GM12878 (cell line): ENCODE measurements at regions of chr9 and their contacts with region 1.

Region 1: GRCh38 chr9:72038890-72039410 is 21.5 kb downstream of the C9orf57 start:
- DNase-seq: peak; percentile 45
- ATAC-seq: peak; percentile 95
- H3K4me3 ChIP-seq: no peak overlapping the region
- H3K27ac ChIP-seq: no peak overlapping the region
- H3K4me1 ChIP-seq: no peaks in the 10 kb centered on the region; the same call in 1 of the 2 replicates
- H3K27me3 ChIP-seq: no peaks in the 10 kb centered on the region
- CTCF ChIP-seq: peak; percentile 93 to 96 (median 94)
- EP300 ChIP-seq: no peak
- POLR2A ChIP-seq: no peak
- RAD21 ChIP-seq: peak; percentile 95

Region 2: GRCh38 chr9:71716138-71716909 is 322.6 kb before region 1 on chr9:
- CTCF ChIA-PET with region 1: no interaction called
- POLR2A ChIA-PET with region 1: no interaction called
- RAD21 ChIA-PET with region 1: no interaction called
- SMC1A ChIA-PET with region 1: no interaction called
- in situ Hi-C with region 1: no loop called
- intact Hi-C with region 1: no loop called
- DNase-seq: no peak
- ATAC-seq: no peak
- H3K4me3 ChIP-seq: no peak overlapping the region
- H3K27ac ChIP-seq: no peak overlapping the region
- H3K4me1 ChIP-seq: no peaks in the 10 kb centered on the region
- H3K27me3 ChIP-seq: no peaks in the 10 kb centered on the region
- CTCF ChIP-seq: peak in 2 of 3 experiments; percentile 17 to 25; a peak in 3 of 6 replicates
- EP300 ChIP-seq: no peak
- POLR2A ChIP-seq: no peak
- RAD21 ChIP-seq: no peak

Region 3: DNA sequence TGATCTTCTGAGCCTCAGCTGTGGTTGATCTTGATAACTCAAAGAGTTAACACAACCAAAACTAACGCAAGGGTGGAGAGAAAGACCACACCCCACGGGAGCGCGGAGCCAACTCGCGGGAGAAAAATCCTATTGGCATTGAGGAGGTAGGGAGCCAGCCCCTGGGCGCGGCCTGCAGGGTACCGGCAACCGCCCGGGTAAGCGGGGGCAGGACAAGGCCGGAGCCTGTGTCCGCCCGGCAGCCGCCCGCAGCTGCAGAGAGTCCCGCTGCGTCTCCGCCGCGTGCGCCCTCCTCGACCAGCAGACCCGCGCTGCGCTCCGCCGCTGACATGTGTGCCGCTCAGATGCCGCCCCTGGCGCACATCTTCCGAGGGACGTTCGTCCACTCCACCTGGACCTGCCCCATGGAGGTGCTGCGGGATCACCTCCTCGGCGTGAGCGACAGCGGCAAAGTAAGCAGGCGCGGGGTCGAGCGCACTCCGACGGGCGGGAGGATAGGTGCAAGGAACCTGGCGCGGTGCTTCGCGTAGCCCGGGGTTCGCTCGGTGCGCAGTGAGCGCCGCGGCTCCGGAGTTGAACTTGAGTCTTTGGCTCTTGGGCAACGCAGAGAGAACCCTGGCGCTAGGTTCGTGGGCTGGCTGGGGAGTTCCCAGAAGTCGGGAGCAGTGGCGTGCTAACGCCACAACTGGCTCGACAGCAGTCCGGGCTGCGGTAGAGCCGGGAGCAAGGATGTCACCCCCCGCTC is 110.5 kb after region 1 on chr9 and contains the start of gene GDA:
- CTCF ChIA-PET with region 1: interaction called, 6 read pairs
- POLR2A ChIA-PET with region 1: no interaction called
- RAD21 ChIA-PET with region 1: interaction called, 15 read pairs
- SMC1A ChIA-PET with region 1: interaction called, 10 read pairs
- in situ Hi-C with region 1: no loop called
- intact Hi-C with region 1: loop called (anchors 2 kb)
- DNase-seq: no peak
- ATAC-seq: peak; percentile 41
- H3K4me3 ChIP-seq: no peak within 1 kb of the TSS
- H3K27ac ChIP-seq: no peak within 1 kb of the TSS
- H3K4me1 ChIP-seq: no peaks in the 10 kb centered on the region; the same call in 1 of the 2 replicates
- H3K27me3 ChIP-seq: peaks cover 2 to 3% of the 10 kb centered on the region in 2 experiments; a peak in 2 of 4 replicates
- CTCF ChIP-seq: no peak
- EP300 ChIP-seq: no peak
- POLR2A ChIP-seq: no peak
- RAD21 ChIP-seq: no peak
- polyA plus RNA-seq, gene GDA: 0.23 to 0.49 TPM

Region 4: GRCh38 chr9:72203205-72203803 is 164.4 kb after region 1 on chr9:
- CTCF ChIA-PET with region 1: interaction called, 82 read pairs
- POLR2A ChIA-PET with region 1: interaction called, 6 read pairs
- RAD21 ChIA-PET with region 1: interaction called, 37 read pairs
- SMC1A ChIA-PET with region 1: interaction called, 80 read pairs
- in situ Hi-C with region 1: no loop called
- intact Hi-C with region 1: loop called (anchors 1 kb)
- DNase-seq: no peak
- ATAC-seq: peak; percentile 76
- H3K4me3 ChIP-seq: no peak overlapping the region
- H3K27ac ChIP-seq: no peak overlapping the region
- H3K4me1 ChIP-seq: peaks cover 4% of the 10 kb centered on the region
- H3K27me3 ChIP-seq: no peaks in the 10 kb centered on the region
- CTCF ChIP-seq: peak; percentile 62 to 71 (median 71)
- EP300 ChIP-seq: no peak
- POLR2A ChIP-seq: no peak
- RAD21 ChIP-seq: peak; percentile 51

Region 5: DNA sequence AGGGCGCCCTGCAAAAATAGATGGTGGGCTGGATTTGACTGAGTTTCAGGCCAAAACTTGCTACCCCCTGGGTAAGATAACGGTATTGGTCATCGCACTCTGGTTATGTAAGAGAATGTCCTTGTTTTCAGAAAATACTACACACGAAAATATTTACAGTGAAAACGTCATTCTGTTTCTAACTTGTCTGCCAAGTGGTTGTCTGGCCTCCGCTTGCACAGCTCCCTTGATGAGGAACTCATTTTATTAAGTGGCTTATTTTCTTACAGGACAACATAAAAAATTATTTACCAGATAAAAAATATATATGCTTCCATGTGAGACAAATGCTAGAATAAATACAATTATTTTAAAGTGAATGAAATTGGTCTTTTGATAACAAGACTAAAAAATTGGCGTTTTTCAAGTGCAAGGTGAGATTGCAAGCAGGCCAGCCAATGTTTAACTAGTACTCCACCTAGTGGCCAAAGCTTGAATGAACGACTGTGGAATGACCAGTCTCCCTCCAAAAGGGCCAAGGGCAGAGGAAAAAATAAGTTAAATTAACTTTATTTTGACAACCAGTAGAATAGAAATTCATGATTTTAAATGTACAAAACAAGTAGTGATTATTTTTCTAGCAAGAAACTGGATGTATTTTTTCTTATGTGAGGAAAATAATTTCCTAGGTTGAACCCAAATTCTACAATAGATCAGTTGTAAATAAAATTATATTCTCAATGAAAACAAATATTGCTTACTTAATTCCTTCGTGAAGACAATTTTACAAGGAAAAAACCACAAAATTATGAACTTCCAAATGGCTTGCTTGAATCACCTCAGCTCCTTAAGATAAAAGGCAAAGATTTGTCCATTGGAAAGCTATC is 232.9 kb after region 1 on chr9:
- CTCF ChIA-PET with region 1: interaction called, 470 read pairs
- POLR2A ChIA-PET with region 1: interaction called, 3 read pairs
- RAD21 ChIA-PET with region 1: interaction called, 365 read pairs
- SMC1A ChIA-PET with region 1: interaction called, 367 read pairs
- in situ Hi-C with region 1: loop called (anchors 5 kb)
- intact Hi-C with region 1: loop called (anchors 1 kb)
- DNase-seq: no peak
- ATAC-seq: peak; percentile 78
- H3K4me3 ChIP-seq: no peak overlapping the region
- H3K27ac ChIP-seq: no peak overlapping the region
- H3K4me1 ChIP-seq: peaks cover 3% of the 10 kb centered on the region; the same call in 1 of the 2 replicates
- H3K27me3 ChIP-seq: peaks cover 0 to 2% of the 10 kb centered on the region in 2 experiments; a peak in 1 of 4 replicates
- CTCF ChIP-seq: peak; percentile 80 to 82 (median 81)
- EP300 ChIP-seq: no peak
- POLR2A ChIP-seq: no peak
- RAD21 ChIP-seq: peak; percentile 83

Region 6: GRCh38 chr9:72592502-72593403 is 553.8 kb after region 1 on chr9:
- CTCF ChIA-PET with region 1: interaction called, 10 read pairs
- POLR2A ChIA-PET with region 1: no interaction called
- RAD21 ChIA-PET with region 1: interaction called, 6 read pairs
- SMC1A ChIA-PET with region 1: interaction called, 12 read pairs
- in situ Hi-C with region 1: loop called (anchors 5 kb)
- intact Hi-C with region 1: loop called (anchors 5 kb)
- DNase-seq: peak; percentile 23
- ATAC-seq: peak; percentile 94
- H3K4me3 ChIP-seq: no peak overlapping the region
- H3K27ac ChIP-seq: no peak overlapping the region
- H3K4me1 ChIP-seq: no peaks in the 10 kb centered on the region
- H3K27me3 ChIP-seq: no peaks in the 10 kb centered on the region
- CTCF ChIP-seq: peak; percentile 64 to 76 (median 69)
- EP300 ChIP-seq: no peak
- POLR2A ChIP-seq: no peak
- RAD21 ChIP-seq: peak; percentile 86

Region 7: GRCh38 chr9:73023025-73023541 is 984.1 kb after region 1 on chr9:
- CTCF ChIA-PET with region 1: interaction called, 11 read pairs
- POLR2A ChIA-PET with region 1: no interaction called
- RAD21 ChIA-PET with region 1: interaction called, 6 read pairs
- SMC1A ChIA-PET with region 1: interaction called, 3 read pairs
- in situ Hi-C with region 1: no loop called
- intact Hi-C with region 1: loop called (anchors 5 kb)
- DNase-seq: peak; percentile 3
- ATAC-seq: peak; percentile 64
- H3K4me3 ChIP-seq: no peak overlapping the region
- H3K27ac ChIP-seq: no peak overlapping the region
- H3K4me1 ChIP-seq: no peaks in the 10 kb centered on the region
- H3K27me3 ChIP-seq: no peaks in the 10 kb centered on the region; a peak in 1 of 4 replicates
- CTCF ChIP-seq: peak; percentile 65 to 78 (median 70); a peak in 5 of 6 replicates
- EP300 ChIP-seq: no peak
- POLR2A ChIP-seq: no peak
- RAD21 ChIP-seq: peak; percentile 63